ENCODE measurements at regions of chr17 and their contacts with region 1.

Region 1: DNA sequence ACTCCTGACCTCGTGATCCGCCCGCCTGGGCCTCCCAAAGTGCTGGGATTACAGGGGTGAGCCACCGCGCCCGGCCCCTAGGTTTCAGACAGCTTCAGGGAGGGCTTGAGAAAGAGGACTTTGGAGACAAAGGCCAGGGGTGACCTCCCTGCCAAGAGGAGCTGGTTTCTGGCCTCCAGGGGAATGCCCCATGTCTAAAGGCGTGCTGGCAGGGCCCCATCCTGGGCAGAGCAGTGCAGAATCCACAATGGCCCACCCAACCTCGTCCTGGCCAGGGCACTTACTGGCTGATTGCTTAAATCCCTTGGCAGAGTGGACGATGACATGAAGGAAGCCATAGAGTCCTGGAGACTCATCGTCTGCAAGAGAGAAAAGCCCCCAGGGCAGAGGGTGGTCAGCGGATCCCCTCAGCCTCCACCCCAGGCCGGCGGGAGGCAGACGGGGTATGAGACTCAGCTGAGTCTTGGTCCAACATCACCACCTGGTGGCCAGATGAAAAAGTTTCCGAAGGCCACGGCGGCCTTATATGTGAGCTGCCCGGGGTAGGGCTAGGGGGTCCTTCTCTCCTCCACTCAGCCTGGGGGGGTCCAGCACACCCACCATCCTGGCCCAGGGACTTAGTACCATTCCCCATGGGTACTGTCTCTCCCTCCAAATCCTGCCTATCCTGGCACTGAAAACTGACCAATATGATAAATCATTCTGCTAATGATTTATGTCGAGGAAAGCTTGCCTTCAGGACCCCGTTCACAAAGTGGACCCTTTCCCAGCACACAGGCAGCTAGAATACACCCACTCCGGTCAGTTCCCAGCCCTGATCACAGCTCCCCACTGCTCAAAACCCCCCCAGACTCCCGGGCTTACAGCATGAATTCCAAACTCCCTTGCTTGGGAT is 59.1 kb downstream of the TIMM22 start:
- DNase-seq: peak; percentile 90
- H3K4me3 ChIP-seq: no peak overlapping the region; a peak in 1 of 4 replicates
- H3K27ac ChIP-seq: no peak overlapping the region
- H3K4me1 ChIP-seq: no peaks in the 10 kb centered on the region; a peak in 1 of 4 replicates
- H3K27me3 ChIP-seq: no peaks in the 10 kb centered on the region
- CTCF ChIP-seq: peak; percentile 71
- EP300 ChIP-seq: no peak
- RAD21 ChIP-seq: peak; percentile 76

Region 2: GRCh38 chr17:979538-980405 is 76.2 kb before region 1 on chr17 and contains the start of gene NXN:
- CTCF ChIA-PET with region 1: interaction called, 14 read pairs
- POLR2A ChIA-PET with region 1: no interaction called
- DNase-seq: peak; percentile 99
- H3K4me3 ChIP-seq: peak within 1 kb of the TSS; percentile 69 to 71
- H3K27ac ChIP-seq: peak within 1 kb of the TSS; percentile 32 to 65; a peak in 3 of 4 replicates
- H3K4me1 ChIP-seq: peaks cover 0 to 16% of the 10 kb centered on the region in 2 experiments; a peak in 2 of 4 replicates
- H3K27me3 ChIP-seq: peaks cover 26% of the 10 kb centered on the region
- CTCF ChIP-seq: peak; percentile 34; the same call in 1 of the 2 replicates
- EP300 ChIP-seq: no peak
- RAD21 ChIP-seq: peak; percentile 17; the same call in 1 of the 2 replicates
- polyA plus RNA-seq, gene NXN: 19.5 and 23.9 TPM in 2 replicates

Region 3: DNA sequence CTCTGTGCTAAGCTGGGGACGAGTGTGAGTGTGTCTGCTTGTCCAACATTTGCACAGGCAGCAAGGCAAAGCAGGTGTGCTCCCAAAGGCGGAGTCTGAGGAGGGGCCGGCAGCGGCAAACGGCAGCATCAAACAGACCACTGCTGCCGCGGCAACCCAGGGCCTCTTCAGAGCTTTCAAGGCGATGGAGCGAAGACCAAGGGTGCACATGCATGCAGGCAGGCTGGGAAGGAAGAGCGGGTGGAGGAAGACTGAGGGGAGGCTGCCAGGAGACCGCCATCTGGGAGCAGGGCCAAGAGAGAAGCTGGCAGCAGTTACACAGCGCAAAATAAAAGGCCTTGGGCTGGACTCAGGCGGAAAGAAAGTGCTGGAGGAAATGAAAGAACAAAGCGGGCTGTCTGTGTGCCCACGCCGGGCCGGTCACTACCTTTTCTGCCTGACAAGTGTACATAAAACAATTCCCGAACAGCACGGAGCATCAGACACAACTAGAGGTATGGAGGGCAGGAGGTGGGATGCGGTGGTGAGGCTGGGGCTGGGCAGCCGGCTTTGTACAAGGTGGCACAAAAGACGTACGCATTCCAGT is 50.5 kb before region 1 on chr17:
- CTCF ChIA-PET with region 1: interaction called, 66 read pairs
- POLR2A ChIA-PET with region 1: interaction called, 3 read pairs
- DNase-seq: peak; percentile 44
- H3K4me3 ChIP-seq: no peak overlapping the region
- H3K27ac ChIP-seq: peak overlapping the region in 1 of 2 experiments; percentile 24; a peak in 2 of 4 replicates
- H3K4me1 ChIP-seq: peaks cover 12 to 43% of the 10 kb centered on the region in 2 experiments; a peak in 3 of 4 replicates
- H3K27me3 ChIP-seq: no peaks in the 10 kb centered on the region
- CTCF ChIP-seq: no peak
- EP300 ChIP-seq: no peak
- RAD21 ChIP-seq: no peak

Region 4: GRCh38 chr17:1039511-1040215 is 16.3 kb before region 1 on chr17:
- CTCF ChIA-PET with region 1: interaction called, 54 read pairs
- POLR2A ChIA-PET with region 1: no interaction called
- DNase-seq: no peak
- H3K4me3 ChIP-seq: no peak overlapping the region
- H3K27ac ChIP-seq: peak overlapping the region in 1 of 2 experiments; percentile 16; a peak in 1 of 4 replicates
- H3K4me1 ChIP-seq: peaks cover 0 to 13% of the 10 kb centered on the region in 2 experiments; a peak in 1 of 4 replicates
- H3K27me3 ChIP-seq: no peaks in the 10 kb centered on the region
- CTCF ChIP-seq: no peak
- EP300 ChIP-seq: no peak
- RAD21 ChIP-seq: no peak

Region 5: GRCh38 chr17:1089915-1090314 is 33.9 kb after region 1 on chr17:
- CTCF ChIA-PET with region 1: no interaction called
- POLR2A ChIA-PET with region 1: no interaction called
- DNase-seq: no peak
- H3K4me3 ChIP-seq: no peak overlapping the region
- H3K27ac ChIP-seq: peak overlapping the region in 1 of 2 experiments; percentile 94; a peak in 1 of 4 replicates
- H3K4me1 ChIP-seq: peaks cover 14% of the 10 kb centered on the region in 2 experiments; a peak in 3 of 4 replicates
- H3K27me3 ChIP-seq: no peaks in the 10 kb centered on the region
- CTCF ChIP-seq: no peak
- EP300 ChIP-seq: no peak
- RAD21 ChIP-seq: no peak

Region 6: DNA sequence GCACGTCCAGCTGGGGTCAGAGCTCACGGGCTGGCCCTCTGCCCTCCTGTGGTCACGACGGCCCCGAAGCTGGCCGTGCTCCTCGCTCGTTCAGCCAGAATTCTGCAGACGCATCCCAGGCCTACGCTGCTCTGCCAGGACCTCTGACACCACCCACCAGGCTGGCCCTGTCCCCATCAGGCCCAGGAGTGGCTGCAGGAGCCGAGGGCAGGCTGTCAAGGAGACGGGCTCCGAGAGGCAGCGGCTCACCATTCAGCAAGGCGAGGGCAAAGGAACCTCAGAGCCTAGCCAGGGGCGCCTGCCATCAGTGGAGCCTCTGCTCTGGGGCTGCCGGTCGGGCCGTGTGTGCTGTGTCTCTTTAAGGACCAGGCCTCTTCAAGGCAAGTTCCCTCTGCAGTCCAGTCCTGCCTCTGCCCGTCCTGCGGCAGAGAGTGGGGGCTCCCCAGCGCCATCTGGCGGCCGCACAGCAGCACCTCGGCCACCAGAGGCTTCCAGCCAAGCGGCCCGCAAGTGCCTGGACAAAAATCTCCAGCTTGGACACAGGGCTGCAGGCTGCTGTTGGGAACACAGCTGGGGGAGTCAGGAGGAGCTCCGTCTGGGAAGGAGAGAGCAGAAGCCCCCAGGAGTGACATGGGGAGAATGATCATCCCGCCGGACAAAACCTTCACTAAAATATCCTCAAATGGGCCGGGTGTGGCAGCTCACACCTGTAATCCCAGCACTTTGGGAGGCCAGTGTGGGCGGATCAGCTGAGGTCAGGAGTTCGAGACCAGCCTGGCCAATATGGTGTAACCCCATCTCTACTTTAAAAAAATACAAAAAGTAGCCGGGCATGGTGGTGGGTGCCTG is 131.1 kb after region 1 on chr17:
- CTCF ChIA-PET with region 1: interaction called, 14 read pairs
- POLR2A ChIA-PET with region 1: no interaction called
- DNase-seq: peak; percentile 93
- H3K4me3 ChIP-seq: peak overlapping the region in 1 of 2 experiments; percentile 12; a peak in 1 of 4 replicates
- H3K27ac ChIP-seq: no peak overlapping the region
- H3K4me1 ChIP-seq: peaks cover 0 to 16% of the 10 kb centered on the region in 2 experiments; a peak in 1 of 4 replicates
- H3K27me3 ChIP-seq: no peaks in the 10 kb centered on the region
- CTCF ChIP-seq: peak; percentile 95
- EP300 ChIP-seq: no peak
- RAD21 ChIP-seq: peak; percentile 80